ENCODE measurements at regions of chr1 and their contacts with region 1.

Region 1: GRCh38 chr1:183471743-183472487 is 384 bp upstream of the SMG7 start:
- DNase-seq: peak; percentile 98 to 99
- H3K4me3 ChIP-seq: peak overlapping the region; percentile 68 to 99
- H3K27ac ChIP-seq: peak overlapping the region; percentile 96 to 97
- H3K4me1 ChIP-seq: peaks cover 0 to 5% of the 10 kb centered on the region in 2 donors
- H3K27me3 ChIP-seq: no peaks in the 10 kb centered on the region
- CTCF ChIP-seq: peak; percentile 6 to 36 (median 18)
- POLR2A ChIP-seq: peak; percentile 28 to 57

Region 2: GRCh38 chr1:183416850-183417771 is 54.8 kb before region 1 on chr1:
- intact Hi-C with region 1: no loop called
- DNase-seq: peak; percentile 31 to 60
- H3K4me3 ChIP-seq: peak overlapping the region in 1 of 2 donors; percentile 2
- H3K27ac ChIP-seq: no peak overlapping the region
- H3K4me1 ChIP-seq: peaks cover 0 to 14% of the 10 kb centered on the region in 2 donors
- H3K27me3 ChIP-seq: no peaks in the 10 kb centered on the region
- CTCF ChIP-seq: no peak
- POLR2A ChIP-seq: no peak

Region 3: GRCh38 chr1:183635606-183636333 is 163.9 kb after region 1 on chr1 and contains the start of gene ARPC5:
- intact Hi-C with region 1: loop called (anchors 10 kb)
- DNase-seq: peak; percentile 96 to 98
- H3K4me3 ChIP-seq: peak within 1 kb of the TSS; percentile 71 to 92
- H3K27ac ChIP-seq: peak within 1 kb of the TSS; percentile 91 to 97
- H3K4me1 ChIP-seq: peaks cover 0 to 5% of the 10 kb centered on the region in 2 donors
- H3K27me3 ChIP-seq: no peaks in the 10 kb centered on the region
- CTCF ChIP-seq: peak in 2 of 4 experiments; percentile 2 to 7
- POLR2A ChIP-seq: peak; percentile 90 to 95
- total RNA-seq, gene ARPC5: 73.0 to 234 (median 170) TPM

Measured in uterus (tissue), 4 donors.